Naive thymus-derived CD4-positive, alpha-beta T cell (primary cell): ENCODE measurements at regions of chrX and their contacts with region 1.

Region 1: DNA sequence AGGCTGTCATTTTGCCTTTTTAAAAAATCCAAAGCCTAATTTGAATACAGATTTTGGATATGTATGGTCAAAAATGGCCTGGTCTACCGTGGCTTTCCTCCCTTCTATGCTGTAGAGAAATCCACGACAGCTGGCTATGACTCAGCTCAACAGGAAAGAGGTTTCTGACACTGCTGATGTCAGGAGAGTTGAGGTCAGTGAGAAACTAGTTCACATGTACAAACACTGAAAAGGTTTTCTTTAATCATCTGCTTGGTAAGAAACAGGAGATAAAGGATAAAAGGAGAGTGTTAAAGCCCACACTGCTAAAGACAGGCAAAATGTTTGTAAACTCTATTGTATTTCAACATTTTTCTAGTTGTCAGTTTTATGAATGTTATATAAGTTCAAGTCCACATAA is 113.9 kb downstream of the NYX start:
- DNase-seq: peak in 1 of 9 donors; percentile 24
- ATAC-seq: peak; percentile 82
- H3K4me3 ChIP-seq: no peak overlapping the region
- H3K4me3 Mint-ChIP-seq: peak overlapping the region in 1 of 10 donors; percentile 50
- H3K27ac ChIP-seq: no peak overlapping the region
- H3K27ac Mint-ChIP-seq: peak overlapping the region in 1 of 9 donors; percentile 81
- H3K4me1 ChIP-seq: peaks cover 0 to 25% of the 10 kb centered on the region in 2 donors
- H3K4me1 Mint-ChIP-seq: peaks cover 7 to 47% (median 29%) of the 10 kb centered on the region in 7 donors
- H3K27me3 ChIP-seq: no peaks in the 10 kb centered on the region
- H3K27me3 Mint-ChIP-seq: no peaks in the 10 kb centered on the region

Region 2: GRCh38 chrX:40971736-40972135 is 589.3 kb before region 1 on chrX:
- CTCF ChIA-PET with region 1: no interaction called
- POLR2A ChIA-PET with region 1: no interaction called
- intact Hi-C with region 1: no loop called
- DNase-seq: no peak
- ATAC-seq: no peak
- H3K4me3 ChIP-seq: no peak overlapping the region
- H3K4me3 Mint-ChIP-seq: no peak overlapping the region
- H3K27ac ChIP-seq: no peak overlapping the region
- H3K27ac Mint-ChIP-seq: no peak overlapping the region
- H3K4me1 ChIP-seq: no peaks in the 10 kb centered on the region
- H3K4me1 Mint-ChIP-seq: peaks cover 0 to 4% (median 0%) of the 10 kb centered on the region in 7 donors
- H3K27me3 ChIP-seq: no peaks in the 10 kb centered on the region
- H3K27me3 Mint-ChIP-seq: no peaks in the 10 kb centered on the region

Region 3: GRCh38 chrX:41275661-41276609 is 285.1 kb before region 1 on chrX:
- CTCF ChIA-PET with region 1: no interaction called
- POLR2A ChIA-PET with region 1: no interaction called
- intact Hi-C with region 1: loop called in 1 of 2 experiments (anchors 5 kb)
- DNase-seq: peak in 8 of 9 donors; percentile 12 to 50 (median 43)
- ATAC-seq: peak; percentile 76
- H3K4me3 ChIP-seq: peak overlapping the region; percentile 64
- H3K4me3 Mint-ChIP-seq: peak overlapping the region; percentile 75 to 88 (median 82)
- H3K27ac ChIP-seq: peak overlapping the region; percentile 35
- H3K27ac Mint-ChIP-seq: peak overlapping the region in 8 of 9 donors; percentile 36 to 85 (median 70)
- H3K4me1 ChIP-seq: no peaks in the 10 kb centered on the region
- H3K4me1 Mint-ChIP-seq: peaks cover 0 to 16% (median 10%) of the 10 kb centered on the region in 7 donors
- H3K27me3 ChIP-seq: no peaks in the 10 kb centered on the region
- H3K27me3 Mint-ChIP-seq: peaks cover 0 to 2% (median 0%) of the 10 kb centered on the region in 5 donors

Region 4: GRCh38 chrX:41664307-41665299 is 103.6 kb after region 1 on chrX:
- CTCF ChIA-PET with region 1: no interaction called
- POLR2A ChIA-PET with region 1: no interaction called
- intact Hi-C with region 1: loop called in 1 of 2 experiments (anchors 5 kb)
- DNase-seq: peak in 1 of 9 donors; percentile 22
- ATAC-seq: no peak
- H3K4me3 ChIP-seq: no peak overlapping the region
- H3K4me3 Mint-ChIP-seq: no peak overlapping the region
- H3K27ac ChIP-seq: no peak overlapping the region
- H3K27ac Mint-ChIP-seq: no peak overlapping the region
- H3K4me1 ChIP-seq: no peaks in the 10 kb centered on the region
- H3K4me1 Mint-ChIP-seq: peaks cover 0 to 31% (median 13%) of the 10 kb centered on the region in 7 donors
- H3K27me3 ChIP-seq: no peaks in the 10 kb centered on the region
- H3K27me3 Mint-ChIP-seq: no peaks in the 10 kb centered on the region

Region 5: GRCh38 chrX:41734530-41734929 is 173.5 kb after region 1 on chrX:
- CTCF ChIA-PET with region 1: no interaction called
- POLR2A ChIA-PET with region 1: no interaction called
- intact Hi-C with region 1: loop called in 1 of 2 experiments (anchors 1 kb)
- DNase-seq: no peak
- ATAC-seq: no peak
- H3K4me3 ChIP-seq: no peak overlapping the region
- H3K4me3 Mint-ChIP-seq: peak overlapping the region in 1 of 10 donors; percentile 72
- H3K27ac ChIP-seq: no peak overlapping the region
- H3K27ac Mint-ChIP-seq: peak overlapping the region in 1 of 9 donors; percentile 75
- H3K4me1 ChIP-seq: no peaks in the 10 kb centered on the region
- H3K4me1 Mint-ChIP-seq: peaks cover 0 to 28% (median 7%) of the 10 kb centered on the region in 7 donors
- H3K27me3 ChIP-seq: no peaks in the 10 kb centered on the region
- H3K27me3 Mint-ChIP-seq: no peaks in the 10 kb centered on the region

Region 6: DNA sequence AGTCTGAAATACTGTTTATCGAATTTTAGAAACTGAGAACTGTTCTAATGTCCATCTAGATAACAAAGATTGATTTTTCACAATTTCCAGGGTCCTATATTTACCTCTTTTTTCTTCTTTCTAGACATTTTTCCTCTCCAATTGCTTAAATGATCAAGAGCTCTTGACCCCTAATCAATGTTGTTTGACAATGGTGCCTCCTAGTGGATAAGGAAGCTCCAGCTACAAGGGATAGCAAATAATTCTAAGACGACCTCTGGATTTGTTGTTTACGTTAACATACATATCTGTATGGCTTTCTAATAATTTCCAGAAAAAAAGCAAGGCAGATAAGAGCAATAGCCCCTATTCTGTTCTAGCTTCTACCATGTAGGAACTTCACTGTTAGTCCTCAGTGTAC is 198.8 kb after region 1 on chrX:
- CTCF ChIA-PET with region 1: no interaction called
- POLR2A ChIA-PET with region 1: no interaction called
- intact Hi-C with region 1: loop called in 1 of 2 experiments (anchors 1 kb)
- DNase-seq: peak in 1 of 9 donors; percentile 4
- ATAC-seq: no peak
- H3K4me3 ChIP-seq: no peak overlapping the region
- H3K4me3 Mint-ChIP-seq: no peak overlapping the region
- H3K27ac ChIP-seq: no peak overlapping the region
- H3K27ac Mint-ChIP-seq: no peak overlapping the region
- H3K4me1 ChIP-seq: no peaks in the 10 kb centered on the region
- H3K4me1 Mint-ChIP-seq: peaks cover 0 to 28% (median 10%) of the 10 kb centered on the region in 7 donors
- H3K27me3 ChIP-seq: no peaks in the 10 kb centered on the region
- H3K27me3 Mint-ChIP-seq: no peaks in the 10 kb centered on the region

Region 7: GRCh38 chrX:41923257-41923969 is 362.4 kb after region 1 on chrX and contains the start of gene CASK:
- CTCF ChIA-PET with region 1: no interaction called
- POLR2A ChIA-PET with region 1: no interaction called
- intact Hi-C with region 1: loop called in 1 of 2 experiments (anchors 5 kb)
- DNase-seq: peak; percentile 74 to 91 (median 84)
- ATAC-seq: peak; percentile 92
- H3K4me3 ChIP-seq: peak within 1 kb of the TSS; percentile 78
- H3K4me3 Mint-ChIP-seq: peak within 1 kb of the TSS; percentile 91 to 99 (median 92)
- H3K27ac ChIP-seq: peak within 1 kb of the TSS; percentile 70
- H3K27ac Mint-ChIP-seq: peak within 1 kb of the TSS; percentile 76 to 95 (median 91)
- H3K4me1 ChIP-seq: peaks cover 5% of the 10 kb centered on the region in 2 donors
- H3K4me1 Mint-ChIP-seq: peaks cover 6 to 39% (median 29%) of the 10 kb centered on the region in 7 donors
- H3K27me3 ChIP-seq: no peaks in the 10 kb centered on the region
- H3K27me3 Mint-ChIP-seq: peaks cover 0 to 2% (median 0%) of the 10 kb centered on the region in 5 donors
- total RNA-seq, gene CASK: 31.5 to 72.4 (median 65.0) TPM